Motor neuron (in vitro differentiated cells): ENCODE measurements at regions of chr12 and their contacts with region 1.

Region 1: DNA sequence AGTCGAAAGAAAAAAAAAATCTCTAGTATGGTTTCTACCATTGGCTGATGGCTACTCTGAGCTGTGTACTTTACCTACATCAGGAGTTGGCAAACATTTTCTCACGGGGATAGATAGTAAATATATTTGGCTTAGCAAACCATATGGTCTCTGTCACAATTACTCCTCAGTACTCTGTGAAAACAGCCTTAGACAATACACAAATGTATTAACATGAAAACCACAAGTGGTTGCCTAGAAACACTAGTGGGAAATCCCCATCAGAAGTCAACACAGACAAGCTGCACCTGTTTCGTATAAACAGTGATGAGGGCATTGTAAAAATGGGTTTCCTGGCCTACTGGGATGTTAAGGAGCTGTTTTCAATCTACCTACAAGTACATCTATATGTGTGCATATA is 84.6 kb upstream of the NAV3 start:
- ATAC-seq: peak; percentile 29 to 97 (median 54)
- H3K4me3 ChIP-seq: no peak overlapping the region
- H3K27ac ChIP-seq: no peak overlapping the region
- H3K4me1 ChIP-seq: peaks cover 5 to 6% of the 10 kb centered on the region in 2 donors

Region 2: DNA sequence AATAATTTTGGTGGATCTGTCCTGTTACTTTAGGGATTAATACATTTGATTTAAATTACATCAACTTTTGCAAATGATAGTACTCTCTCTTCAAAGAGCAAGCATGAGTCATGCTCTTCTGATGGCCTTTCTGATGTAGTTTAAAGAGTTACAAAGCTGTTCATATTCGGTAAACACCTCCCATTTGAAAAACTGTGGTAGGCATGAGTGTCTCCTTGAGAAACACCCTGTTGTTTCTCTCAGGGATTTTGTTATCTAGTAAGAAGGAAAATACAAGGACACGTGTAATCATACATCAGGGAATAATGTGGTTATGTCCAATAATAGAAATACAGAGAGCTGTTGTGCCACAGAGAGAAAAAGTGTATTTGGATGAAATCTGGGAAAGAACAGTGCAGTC is 627.4 kb before region 1 on chr12:
- in situ Hi-C with region 1: no loop called
- ATAC-seq: peak in 2 of 8 experiments; percentile 60 to 61
- H3K4me3 ChIP-seq: no peak overlapping the region
- H3K27ac ChIP-seq: no peak overlapping the region
- H3K4me1 ChIP-seq: peaks cover 18 to 29% of the 10 kb centered on the region in 2 donors

Region 3: GRCh38 chr12:77493302-77494168 is 252.6 kb before region 1 on chr12:
- in situ Hi-C with region 1: no loop called
- ATAC-seq: peak in 2 of 8 experiments; percentile 48 to 51
- H3K4me3 ChIP-seq: no peak overlapping the region
- H3K27ac ChIP-seq: no peak overlapping the region
- H3K4me1 ChIP-seq: peaks cover 10 to 17% of the 10 kb centered on the region in 2 donors

Region 4: DNA sequence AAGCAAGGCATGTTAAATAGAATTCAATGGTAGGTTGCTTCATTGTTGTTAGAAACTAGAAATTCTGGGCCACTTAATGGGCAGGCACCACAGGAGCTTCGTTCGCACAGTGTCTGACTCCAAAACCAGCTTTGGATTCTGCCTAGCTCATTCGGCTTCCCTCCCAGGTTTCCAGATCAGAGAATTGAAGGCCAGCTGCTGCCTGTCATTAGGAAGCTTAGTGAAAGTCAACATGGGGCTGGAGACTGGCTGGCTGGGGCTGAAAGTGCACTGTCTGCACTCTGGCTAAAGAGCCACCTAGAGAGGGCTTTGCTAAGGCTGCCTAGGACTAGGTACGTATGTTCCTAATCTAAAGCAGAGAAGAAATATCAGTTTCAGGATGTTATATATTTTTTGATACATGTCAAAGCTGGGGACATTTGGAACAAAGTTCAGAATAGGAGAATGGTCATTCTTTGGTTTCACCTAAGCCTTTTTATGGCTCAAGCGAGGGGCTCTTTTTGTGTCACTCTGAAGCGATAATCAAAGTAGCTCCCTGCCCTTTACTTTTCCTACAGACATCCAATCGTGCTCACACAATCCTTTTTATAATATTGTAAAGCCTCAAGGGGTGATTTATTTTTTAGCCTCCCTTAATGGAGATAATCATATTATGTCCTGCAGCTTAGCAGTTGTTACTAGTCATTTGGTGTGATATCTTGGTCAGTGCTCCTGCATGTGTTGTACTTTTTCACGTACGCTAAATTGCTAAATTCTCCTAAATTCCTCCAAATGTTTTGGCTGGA is 153.9 kb before region 1 on chr12:
- in situ Hi-C with region 1: no loop called
- ATAC-seq: peak in 5 of 8 experiments; percentile 81 to 95 (median 94)
- H3K4me3 ChIP-seq: no peak overlapping the region
- H3K27ac ChIP-seq: no peak overlapping the region
- H3K4me1 ChIP-seq: peaks cover 10 to 16% of the 10 kb centered on the region in 2 donors

Region 5: GRCh38 chr12:77914081-77914488 is 168.0 kb after region 1 on chr12:
- in situ Hi-C with region 1: loop called in 1 of 9 experiments (anchors 25 kb)
- ATAC-seq: peak in 3 of 8 experiments; percentile 41 to 58 (median 57)
- H3K4me3 ChIP-seq: no peak overlapping the region
- H3K27ac ChIP-seq: no peak overlapping the region
- H3K4me1 ChIP-seq: peaks cover 7 to 18% of the 10 kb centered on the region in 2 donors